MCF 10A (cell line): ENCODE measurements at regions of chr1 and their contacts with region 1.

Region 1: DNA sequence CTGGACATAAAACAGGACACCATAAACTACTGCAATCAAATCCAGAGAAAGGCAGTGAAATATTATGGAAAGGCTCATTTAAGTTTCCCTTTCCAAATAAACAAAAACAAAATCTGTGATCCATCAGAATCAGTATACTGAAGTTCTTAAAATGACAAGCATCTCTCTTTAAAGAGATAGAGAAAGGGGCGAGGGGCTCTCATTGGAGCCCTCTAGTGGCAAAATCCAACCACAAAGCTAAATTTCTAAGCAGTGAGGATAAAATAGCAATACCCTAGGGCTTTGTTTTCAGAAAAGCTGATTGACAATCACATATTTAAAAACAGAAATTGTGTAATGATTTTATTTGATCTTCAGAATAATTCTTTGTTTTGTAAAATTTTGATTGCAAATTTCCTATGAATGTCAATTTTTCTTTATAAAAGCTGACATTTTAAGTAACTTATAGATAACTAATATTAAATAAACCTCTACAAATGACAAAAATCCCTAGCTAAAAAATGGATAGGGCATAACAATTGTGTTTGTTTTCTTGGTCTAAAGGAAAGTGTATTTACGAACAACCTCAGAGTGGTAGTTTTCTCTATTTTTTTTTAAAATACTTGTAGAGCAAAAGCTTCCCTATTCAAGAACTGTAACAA is 138.2 kb downstream of the COL24A1 start:
- DNase-seq: peak; percentile 56
- H3K4me3 Mint-ChIP-seq: no peak overlapping the region
- H3K27ac Mint-ChIP-seq: no peak overlapping the region
- H3K4me1 Mint-ChIP-seq: no peaks in the 10 kb centered on the region
- H3K27me3 Mint-ChIP-seq: peaks cover 9% of the 10 kb centered on the region
- CTCF ChIP-seq: peak; percentile 69

Region 2: DNA sequence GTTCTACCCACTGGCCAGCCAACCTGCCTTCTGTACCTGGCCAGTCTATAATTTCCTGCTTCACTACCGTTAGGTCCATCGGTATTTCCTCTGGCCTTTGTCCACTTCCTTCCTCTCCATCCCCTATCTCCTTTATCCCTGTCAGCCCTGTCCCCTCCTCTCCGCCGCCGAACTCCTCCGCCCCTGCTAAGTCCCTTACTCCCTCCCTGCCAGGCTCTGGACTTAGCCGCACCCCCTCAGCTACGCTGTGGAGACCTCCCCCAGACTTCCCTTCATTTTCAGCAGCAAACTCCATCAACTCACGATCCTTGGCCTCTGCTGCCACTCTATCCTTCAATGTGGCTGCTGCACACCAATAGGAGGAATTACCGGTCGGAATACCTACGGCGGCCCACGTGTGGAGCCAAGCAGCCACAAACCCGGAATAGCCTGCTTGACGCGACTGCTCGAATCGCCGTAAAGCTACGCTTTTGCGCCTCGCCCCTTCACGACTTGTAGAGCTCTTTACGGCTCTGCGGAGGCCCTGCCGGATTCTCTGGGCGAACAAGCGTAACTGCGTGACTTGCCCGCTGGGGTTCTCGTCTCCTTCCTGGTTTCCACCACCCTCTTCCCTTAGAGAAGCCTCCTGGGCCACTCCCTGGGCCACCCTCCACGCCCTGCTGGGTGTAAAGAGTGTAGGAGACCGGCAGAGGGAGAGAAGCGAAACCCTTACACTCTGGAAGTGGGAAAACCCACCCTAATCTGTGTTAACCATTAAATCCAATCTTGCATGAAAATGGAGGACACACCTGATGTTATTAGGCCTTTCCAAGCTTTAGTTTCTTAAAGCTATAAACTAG is 310.2 kb before region 1 on chr1 and contains the start of gene ZNHIT6:
- CTCF ChIA-PET with region 1: interaction called, 5 read pairs
- POLR2A ChIA-PET with region 1: interaction called, 5 read pairs
- intact Hi-C with region 1: loop called (anchors 1 kb)
- DNase-seq: peak; percentile 96
- H3K4me3 Mint-ChIP-seq: no peak within 1 kb of the TSS
- H3K27ac Mint-ChIP-seq: no peak within 1 kb of the TSS
- H3K4me1 Mint-ChIP-seq: peaks cover 13% of the 10 kb centered on the region
- H3K27me3 Mint-ChIP-seq: no peaks in the 10 kb centered on the region
- CTCF ChIP-seq: peak; percentile 32
- total RNA-seq, gene ZNHIT6: 24.7 and 31.3 TPM in 2 replicates

Region 3: DNA sequence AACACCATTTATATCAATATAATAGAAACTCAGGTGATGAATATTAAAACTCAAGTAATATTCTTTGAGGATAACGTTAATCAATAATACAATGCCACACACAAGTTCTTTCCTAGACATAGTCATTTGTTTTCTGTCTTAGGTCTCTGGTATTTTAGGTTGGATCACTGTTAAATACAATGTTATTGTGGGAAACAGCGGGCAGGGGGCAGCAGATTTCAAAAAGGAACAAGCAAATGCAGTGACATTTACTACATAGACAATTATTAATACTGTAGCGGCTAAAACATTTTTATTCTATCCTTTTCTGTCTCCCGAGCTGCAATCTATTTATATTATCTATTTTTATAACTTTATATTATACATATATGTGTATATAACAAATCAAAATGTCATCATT is 123.8 kb before region 1 on chr1:
- CTCF ChIA-PET with region 1: interaction called, 21 read pairs
- POLR2A ChIA-PET with region 1: no interaction called
- intact Hi-C with region 1: no loop called
- DNase-seq: peak; percentile 57
- H3K4me3 Mint-ChIP-seq: no peak overlapping the region
- H3K27ac Mint-ChIP-seq: no peak overlapping the region
- H3K4me1 Mint-ChIP-seq: no peaks in the 10 kb centered on the region
- H3K27me3 Mint-ChIP-seq: no peaks in the 10 kb centered on the region
- CTCF ChIP-seq: peak; percentile 44

Region 4: DNA sequence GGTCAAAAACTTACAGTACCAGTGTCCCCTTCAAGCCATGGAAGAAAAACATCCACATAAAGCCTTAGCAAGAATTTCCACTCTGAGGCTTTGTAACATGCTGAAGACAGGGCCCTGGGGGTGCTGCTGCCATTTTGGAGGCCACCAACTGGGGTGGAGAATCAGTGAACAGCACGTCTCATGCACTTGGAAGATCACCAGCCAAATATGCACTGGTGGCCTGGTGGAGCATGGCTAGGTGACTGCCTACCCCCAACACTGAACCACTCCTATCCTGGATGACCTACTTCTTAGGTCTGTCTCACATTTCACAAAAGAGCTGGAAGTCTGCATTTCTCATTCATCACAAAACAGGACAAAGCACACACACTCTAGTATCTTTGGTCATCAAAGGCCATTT is 11.8 kb after region 1 on chr1:
- CTCF ChIA-PET with region 1: interaction called, 23 read pairs
- POLR2A ChIA-PET with region 1: no interaction called
- intact Hi-C with region 1: no loop called
- DNase-seq: no peak
- H3K4me3 Mint-ChIP-seq: no peak overlapping the region
- H3K27ac Mint-ChIP-seq: no peak overlapping the region
- H3K4me1 Mint-ChIP-seq: no peaks in the 10 kb centered on the region
- H3K27me3 Mint-ChIP-seq: peaks cover 19% of the 10 kb centered on the region
- CTCF ChIP-seq: no peak

Region 5: GRCh38 chr1:86089765-86090164 is 71.4 kb after region 1 on chr1:
- CTCF ChIA-PET with region 1: no interaction called
- POLR2A ChIA-PET with region 1: no interaction called
- intact Hi-C with region 1: no loop called
- DNase-seq: no peak
- H3K4me3 Mint-ChIP-seq: no peak overlapping the region
- H3K27ac Mint-ChIP-seq: no peak overlapping the region
- H3K4me1 Mint-ChIP-seq: no peaks in the 10 kb centered on the region
- H3K27me3 Mint-ChIP-seq: peaks cover 11% of the 10 kb centered on the region
- CTCF ChIP-seq: no peak

Region 6: GRCh38 chr1:86110451-86111129 is 92.2 kb after region 1 on chr1:
- CTCF ChIA-PET with region 1: no interaction called
- POLR2A ChIA-PET with region 1: no interaction called
- intact Hi-C with region 1: no loop called
- DNase-seq: no peak
- H3K4me3 Mint-ChIP-seq: no peak overlapping the region
- H3K27ac Mint-ChIP-seq: no peak overlapping the region
- H3K4me1 Mint-ChIP-seq: no peaks in the 10 kb centered on the region
- H3K27me3 Mint-ChIP-seq: no peaks in the 10 kb centered on the region
- CTCF ChIP-seq: no peak